ENCODE measurements at regions of chr14 and their contacts with region 1.

Region 1: DNA sequence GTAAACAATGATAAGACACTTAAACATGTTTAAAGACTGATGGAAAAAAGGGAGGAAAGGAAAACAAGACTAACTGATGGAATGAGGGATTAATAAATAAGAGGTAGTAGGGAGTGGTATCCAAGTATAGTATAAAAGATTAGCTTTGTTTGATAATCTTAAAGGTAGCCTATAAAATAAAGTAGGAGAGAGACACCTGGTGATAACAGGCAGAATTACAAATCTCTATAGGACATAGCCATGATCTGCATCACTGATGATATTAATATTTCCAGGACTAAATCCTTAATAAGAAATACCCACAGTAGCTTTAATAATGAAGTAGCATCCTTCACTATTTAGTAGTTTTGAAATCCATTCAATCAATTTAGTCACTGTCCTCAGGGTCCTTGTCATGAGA is 30.4 kb downstream of the DLGAP5 start:
- DNase-seq: peak; percentile 50
- H3K4me3 ChIP-seq: no peak overlapping the region
- H3K27ac ChIP-seq: no peak overlapping the region
- H3K4me1 ChIP-seq: no peaks in the 10 kb centered on the region
- H3K27me3 ChIP-seq: no peaks in the 10 kb centered on the region
- CTCF ChIP-seq: peak; percentile 77
- EP300 ChIP-seq: no peak
- RAD21 ChIP-seq: peak; percentile 82

Region 2: GRCh38 chr14:55051426-55052268 is 109.3 kb before region 1 on chr14 and contains the start of gene MAPK1IP1L:
- CTCF ChIA-PET with region 1: interaction called, 14 read pairs
- POLR2A ChIA-PET with region 1: interaction called, 3 read pairs
- DNase-seq: peak; percentile 98
- H3K4me3 ChIP-seq: peak within 1 kb of the TSS; percentile 93 to 98
- H3K27ac ChIP-seq: peak within 1 kb of the TSS; percentile 98 to 100
- H3K4me1 ChIP-seq: peaks cover 7 to 19% of the 10 kb centered on the region in 2 experiments; a peak in 3 of 4 replicates
- H3K27me3 ChIP-seq: no peaks in the 10 kb centered on the region
- CTCF ChIP-seq: peak; percentile 88
- EP300 ChIP-seq: peak in 1 of 2 experiments; percentile 19; a peak in 3 of 4 replicates
- RAD21 ChIP-seq: peak; percentile 58
- polyA plus RNA-seq, gene MAPK1IP1L: 105 and 129 TPM in 2 replicates

Region 3: DNA sequence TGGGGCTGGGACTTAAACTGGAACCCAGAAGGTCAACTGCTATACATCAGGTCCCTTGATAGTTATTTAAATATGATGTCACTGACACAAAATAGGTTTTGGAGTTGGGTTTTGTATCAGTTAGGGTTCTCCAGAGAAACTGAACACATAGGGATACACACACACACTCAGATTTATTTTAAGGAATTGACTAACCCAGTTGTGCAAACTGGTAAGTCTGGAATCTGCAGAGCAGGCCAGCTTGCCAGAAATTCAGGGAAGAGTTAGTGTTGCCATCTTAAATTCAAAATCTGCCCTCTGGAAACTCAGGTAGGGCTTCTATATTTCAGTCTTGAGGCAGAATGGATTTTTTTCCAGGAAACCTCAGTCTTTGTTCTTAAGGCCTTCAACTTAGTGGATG is 72.6 kb before region 1 on chr14:
- CTCF ChIA-PET with region 1: interaction called, 50 read pairs
- POLR2A ChIA-PET with region 1: interaction called, 3 read pairs
- DNase-seq: no peak
- H3K4me3 ChIP-seq: no peak overlapping the region
- H3K27ac ChIP-seq: no peak overlapping the region
- H3K4me1 ChIP-seq: peaks cover 7 to 20% of the 10 kb centered on the region in 2 experiments; a peak in 3 of 4 replicates
- H3K27me3 ChIP-seq: no peaks in the 10 kb centered on the region
- CTCF ChIP-seq: no peak
- EP300 ChIP-seq: no peak
- RAD21 ChIP-seq: no peak

Region 4: GRCh38 chr14:55102141-55102621 is 58.8 kb before region 1 on chr14:
- CTCF ChIA-PET with region 1: interaction called, 16 read pairs
- POLR2A ChIA-PET with region 1: no interaction called
- DNase-seq: peak; percentile 69
- H3K4me3 ChIP-seq: no peak overlapping the region
- H3K27ac ChIP-seq: peak overlapping the region; percentile 87 to 89
- H3K4me1 ChIP-seq: peaks cover 16 to 22% of the 10 kb centered on the region in 2 experiments
- H3K27me3 ChIP-seq: no peaks in the 10 kb centered on the region
- CTCF ChIP-seq: no peak
- EP300 ChIP-seq: peak; percentile 66 to 79; a peak in 3 of 4 replicates
- RAD21 ChIP-seq: peak; percentile 19; the same call in 1 of the 2 replicates

Region 5: GRCh38 chr14:55136885-55137786 is 23.9 kb before region 1 on chr14:
- CTCF ChIA-PET with region 1: interaction called, 22 read pairs
- POLR2A ChIA-PET with region 1: no interaction called
- DNase-seq: peak; percentile 39
- H3K4me3 ChIP-seq: no peak overlapping the region
- H3K27ac ChIP-seq: peak overlapping the region; percentile 38 to 56
- H3K4me1 ChIP-seq: peaks cover 15 to 16% of the 10 kb centered on the region in 2 experiments; a peak in 3 of 4 replicates
- H3K27me3 ChIP-seq: no peaks in the 10 kb centered on the region
- CTCF ChIP-seq: no peak
- EP300 ChIP-seq: no peak
- RAD21 ChIP-seq: no peak

Region 6: GRCh38 chr14:55212634-55213033 is 51.6 kb after region 1 on chr14:
- CTCF ChIA-PET with region 1: no interaction called
- POLR2A ChIA-PET with region 1: no interaction called
- DNase-seq: no peak
- H3K4me3 ChIP-seq: no peak overlapping the region
- H3K27ac ChIP-seq: no peak overlapping the region
- H3K4me1 ChIP-seq: no peaks in the 10 kb centered on the region
- H3K27me3 ChIP-seq: no peaks in the 10 kb centered on the region
- CTCF ChIP-seq: no peak
- EP300 ChIP-seq: no peak
- RAD21 ChIP-seq: no peak

Region 7: GRCh38 chr14:55398679-55399078 is 237.7 kb after region 1 on chr14:
- CTCF ChIA-PET with region 1: no interaction called
- POLR2A ChIA-PET with region 1: no interaction called
- DNase-seq: no peak
- H3K4me3 ChIP-seq: no peak overlapping the region
- H3K27ac ChIP-seq: peak overlapping the region in 1 of 2 experiments; percentile 67; a peak in 2 of 4 replicates
- H3K4me1 ChIP-seq: peaks cover 2 to 10% of the 10 kb centered on the region in 2 experiments; a peak in 3 of 4 replicates
- H3K27me3 ChIP-seq: no peaks in the 10 kb centered on the region
- CTCF ChIP-seq: no peak
- EP300 ChIP-seq: peak in 1 of 2 experiments; percentile 25; a peak in 1 of 4 replicates
- RAD21 ChIP-seq: no peak

Measured in SK-N-SH (cell line).